ENCODE measurements at regions of chr4 and their contacts with region 1.

Region 1: DNA sequence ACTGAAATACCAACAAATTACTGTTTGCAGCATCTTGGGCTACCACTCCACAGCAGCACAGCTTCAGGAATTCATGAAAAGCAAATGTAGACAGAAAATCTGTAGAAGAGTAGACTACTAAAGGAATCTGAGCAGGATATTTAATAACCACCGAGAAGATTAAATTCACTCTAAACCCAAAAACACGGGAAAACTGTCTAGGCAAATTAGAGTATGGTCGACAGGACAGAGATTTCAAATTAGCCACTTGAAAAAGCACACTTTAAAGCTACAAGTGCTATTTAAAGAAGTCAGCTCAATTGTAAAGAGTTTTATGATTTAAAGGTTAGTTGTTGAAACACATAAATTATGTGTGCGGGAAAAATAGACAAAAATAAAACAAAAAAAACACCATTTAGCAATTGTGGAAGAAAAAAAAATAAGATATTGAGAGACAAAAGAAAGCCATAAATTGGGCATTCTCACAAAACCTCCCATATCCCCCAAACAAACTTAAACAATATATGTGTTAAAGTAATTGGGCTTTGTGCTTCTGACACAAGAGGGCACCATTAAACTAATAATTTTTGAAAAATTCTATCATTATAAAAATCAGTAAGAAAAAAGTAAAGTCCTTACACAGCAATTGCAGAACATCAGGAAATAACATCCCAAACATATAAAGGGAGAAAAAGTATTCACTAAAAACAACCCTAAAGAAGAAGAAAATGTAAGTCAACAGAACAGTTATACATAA is 880.8 kb downstream of the TECRL start:
- DNase-seq: no peak
- ATAC-seq: 0 out of 3 replicates have a peak, but pooled peaks have one; percentile 31
- H3K4me3 ChIP-seq: no peak overlapping the region
- H3K27ac ChIP-seq: no peak overlapping the region
- H3K4me1 ChIP-seq: no peaks in the 10 kb centered on the region
- H3K27me3 ChIP-seq: no peaks in the 10 kb centered on the region
- CTCF ChIP-seq: no peak; a peak in 1 of 6 replicates
- EP300 ChIP-seq: no peak
- POLR2A ChIP-seq: no peak
- RAD21 ChIP-seq: peak; percentile 39; the same call in 1 of the 2 replicates

Region 2: DNA sequence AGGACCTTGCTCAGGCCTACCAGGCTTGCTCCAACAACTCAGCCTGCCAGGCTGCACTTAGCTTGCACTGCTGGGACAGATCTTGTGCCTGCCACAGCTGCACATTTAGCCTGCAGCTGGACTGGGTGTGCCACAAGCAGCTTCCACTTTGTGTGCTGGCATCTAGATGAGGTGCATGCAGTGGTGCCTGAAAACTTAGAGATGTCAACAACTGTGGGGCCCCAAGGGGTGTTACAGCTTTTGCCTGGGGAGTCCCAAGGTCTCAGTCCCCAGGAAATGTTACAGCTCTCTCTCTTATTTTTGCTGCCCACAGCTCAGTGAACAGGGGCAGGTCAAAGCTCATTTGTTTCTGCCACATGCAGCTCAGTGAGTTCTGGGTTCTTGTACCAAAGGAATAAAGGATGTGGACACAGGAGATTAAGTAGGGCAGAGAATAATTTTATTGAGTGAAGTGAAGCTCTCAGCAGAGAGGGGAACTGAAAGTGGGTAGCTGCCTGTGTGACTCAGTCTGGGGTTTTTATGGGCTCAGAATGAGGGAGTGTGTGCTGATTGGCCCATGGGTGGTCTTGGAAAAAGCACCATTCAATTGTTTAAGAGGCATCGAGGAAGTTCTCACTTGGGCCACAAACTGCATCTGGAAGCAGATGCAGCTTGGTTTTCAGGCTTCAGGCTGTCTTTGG is 52.5 kb after region 1 on chr4:
- CTCF ChIA-PET with region 1: no interaction called
- POLR2A ChIA-PET with region 1: no interaction called
- RAD21 ChIA-PET with region 1: no interaction called
- SMC1A ChIA-PET with region 1: no interaction called
- in situ Hi-C with region 1: no loop called
- intact Hi-C with region 1: no loop called
- DNase-seq: peak; percentile 36
- ATAC-seq: peak; percentile 96
- H3K4me3 ChIP-seq: no peak overlapping the region
- H3K27ac ChIP-seq: no peak overlapping the region; the same call in 1 of the 2 replicates
- H3K4me1 ChIP-seq: peaks cover 4% of the 10 kb centered on the region
- H3K27me3 ChIP-seq: no peaks in the 10 kb centered on the region
- CTCF ChIP-seq: no peak
- EP300 ChIP-seq: peak in 1 of 2 experiments; percentile 52; a peak in 1 of 4 replicates
- POLR2A ChIP-seq: no peak
- RAD21 ChIP-seq: no peak

Region 3: DNA sequence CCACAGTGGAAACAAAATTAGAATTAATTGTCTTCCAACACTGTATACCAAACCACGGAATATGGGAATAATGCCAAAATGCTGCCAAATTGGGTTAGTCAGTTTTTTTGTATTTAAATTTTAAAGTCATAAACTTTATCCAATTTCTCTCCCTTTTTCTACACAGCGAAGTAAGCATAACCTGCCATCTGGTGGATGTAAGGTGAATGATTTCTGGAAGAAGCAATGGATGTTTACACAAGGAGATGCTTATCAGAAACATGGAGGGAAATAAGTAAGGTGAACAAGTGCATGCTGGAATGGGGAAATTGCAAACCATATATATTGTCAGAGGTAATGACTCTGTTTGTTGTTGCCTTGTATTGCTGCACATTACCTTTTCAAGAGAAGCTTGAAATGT is 189.0 kb after region 1 on chr4:
- CTCF ChIA-PET with region 1: interaction called, 5 read pairs
- POLR2A ChIA-PET with region 1: no interaction called
- RAD21 ChIA-PET with region 1: interaction called, 7 read pairs
- SMC1A ChIA-PET with region 1: interaction called, 10 read pairs
- in situ Hi-C with region 1: no loop called
- intact Hi-C with region 1: loop called (anchors 5 kb)
- DNase-seq: peak; percentile 3
- ATAC-seq: peak; percentile 40; the same call in 1 of the 3 replicates
- H3K4me3 ChIP-seq: no peak overlapping the region
- H3K27ac ChIP-seq: no peak overlapping the region
- H3K4me1 ChIP-seq: no peaks in the 10 kb centered on the region
- H3K27me3 ChIP-seq: no peaks in the 10 kb centered on the region
- CTCF ChIP-seq: peak; percentile 25 to 41 (median 26); a peak in 4 of 6 replicates
- EP300 ChIP-seq: no peak
- POLR2A ChIP-seq: no peak
- RAD21 ChIP-seq: peak; percentile 73

Measured in GM12878 (cell line).